Breast epithelium (tissue), 4 donors: ENCODE measurements at regions of chr5 and their contacts with region 1.

Region 1: GRCh38 chr5:179065703-179066102 is 5.5 kb downstream of the ZNF354C start:
- DNase-seq: no peak
- H3K4me3 ChIP-seq: no peak overlapping the region
- H3K27ac ChIP-seq: no peak overlapping the region
- H3K4me1 ChIP-seq: peaks cover 0 to 9% of the 10 kb centered on the region in 2 donors
- H3K27me3 ChIP-seq: no peaks in the 10 kb centered on the region
- CTCF ChIP-seq: no peak
- POLR2A ChIP-seq: no peak

Region 2: DNA sequence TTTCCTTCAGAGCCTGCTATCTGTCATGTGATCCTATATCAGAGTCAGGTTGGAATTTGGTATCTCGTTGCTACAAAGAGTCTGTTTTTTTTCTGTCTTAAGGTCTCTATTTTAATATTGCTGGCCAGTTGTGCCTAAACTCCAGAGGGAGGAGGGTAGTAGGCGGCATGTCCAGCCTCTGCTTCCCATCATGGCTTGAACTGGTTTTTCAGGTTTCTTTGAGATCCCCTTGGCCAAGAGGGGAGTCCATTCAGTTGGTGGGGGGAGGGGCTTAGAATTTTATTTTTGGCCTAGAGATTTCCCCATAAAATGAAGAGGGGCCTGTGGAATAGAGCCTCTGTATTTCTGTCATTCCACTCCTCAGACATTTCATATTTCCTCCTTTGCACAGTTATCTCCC is 20.9 kb before region 1 on chr5:
- intact Hi-C with region 1: loop called (anchors 1 kb)
- DNase-seq: no peak
- H3K4me3 ChIP-seq: no peak overlapping the region
- H3K27ac ChIP-seq: no peak overlapping the region
- H3K4me1 ChIP-seq: no peaks in the 10 kb centered on the region
- H3K27me3 ChIP-seq: no peaks in the 10 kb centered on the region
- CTCF ChIP-seq: no peak
- POLR2A ChIP-seq: no peak

Region 3: DNA sequence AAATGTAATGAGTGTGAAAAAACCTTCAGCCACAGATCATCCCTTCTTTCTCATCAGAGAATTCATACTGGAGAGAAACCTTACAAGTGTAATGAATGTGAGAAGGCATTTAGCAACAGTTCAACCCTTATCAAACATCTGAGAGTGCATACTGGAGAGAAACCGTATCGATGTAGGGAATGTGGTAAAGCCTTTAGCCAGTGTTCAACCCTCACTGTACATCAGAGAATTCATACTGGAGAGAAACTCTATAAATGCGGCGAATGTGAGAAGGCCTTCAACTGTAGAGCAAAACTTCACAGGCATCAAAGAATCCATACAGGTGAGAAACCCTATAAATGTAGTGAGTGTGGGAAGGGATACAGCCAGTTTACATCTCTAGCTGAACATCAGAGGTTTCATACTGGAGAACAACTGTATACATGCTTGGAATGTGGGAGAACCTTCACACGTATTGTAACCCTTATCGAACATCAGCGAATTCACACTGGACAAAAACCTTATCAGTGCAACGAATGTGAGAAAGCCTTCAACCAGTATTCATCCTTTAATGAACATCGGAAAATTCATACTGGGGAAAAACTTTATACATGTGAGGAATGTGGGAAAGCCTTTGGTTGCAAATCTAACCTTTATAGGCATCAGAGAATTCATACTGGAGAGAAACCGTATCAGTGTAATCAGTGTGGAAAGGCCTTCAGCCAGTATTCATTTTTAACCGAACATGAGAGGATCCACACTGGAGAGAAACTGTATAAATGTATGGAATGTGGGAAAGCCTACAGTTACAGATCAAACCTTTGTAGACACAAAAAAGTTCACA is 13.7 kb after region 1 on chr5:
- intact Hi-C with region 1: no loop called
- DNase-seq: no peak
- H3K4me3 ChIP-seq: peak overlapping the region in 1 of 3 donors; percentile 12
- H3K27ac ChIP-seq: no peak overlapping the region
- H3K4me1 ChIP-seq: no peaks in the 10 kb centered on the region
- H3K27me3 ChIP-seq: no peaks in the 10 kb centered on the region
- CTCF ChIP-seq: no peak
- POLR2A ChIP-seq: no peak